ENCODE measurements at regions of chr3 and their contacts with region 1.

Region 1: GRCh38 chr3:54146506-54147239 is 24.3 kb downstream of the CACNA2D3 start:
- DNase-seq: peak; percentile 81
- ATAC-seq: peak; percentile 93

Region 2: DNA sequence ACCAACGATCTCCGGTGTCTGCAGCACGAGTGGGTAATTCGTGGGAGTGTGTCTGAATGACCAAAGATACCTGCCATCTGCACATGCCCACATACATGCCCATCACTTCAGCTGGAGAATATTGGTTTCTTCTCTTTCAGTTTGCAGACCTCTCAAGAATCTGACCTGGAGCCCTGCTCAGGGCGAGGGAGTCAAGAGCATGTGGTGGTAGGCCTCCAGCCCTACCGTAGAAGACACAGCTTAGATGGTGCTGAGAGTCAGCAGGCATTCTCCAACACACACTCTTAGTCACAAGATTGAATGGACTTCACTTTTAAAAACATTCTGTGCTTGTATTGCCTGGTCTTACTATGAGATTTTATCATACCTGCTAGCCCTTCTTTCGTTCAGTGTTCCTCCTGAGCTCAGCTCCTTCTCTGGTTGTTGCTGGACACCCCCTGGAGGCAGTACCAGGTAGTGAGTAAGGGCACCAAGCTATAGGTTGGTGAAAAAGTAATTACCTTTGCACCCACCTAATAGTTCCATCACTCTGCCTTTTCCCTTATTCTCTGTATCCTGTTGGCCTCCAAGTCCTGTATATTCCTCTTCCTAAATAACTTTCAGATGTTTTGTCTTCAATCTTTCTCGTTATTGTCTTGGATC is 227.7 kb after region 1 on chr3:
- intact Hi-C with region 1: loop called (anchors 5 kb)
- DNase-seq: no peak
- ATAC-seq: peak; percentile 37